Posterior vena cava (tissue), 2 donors: ENCODE measurements at regions of chr11 and their contacts with region 1.

Region 1: DNA sequence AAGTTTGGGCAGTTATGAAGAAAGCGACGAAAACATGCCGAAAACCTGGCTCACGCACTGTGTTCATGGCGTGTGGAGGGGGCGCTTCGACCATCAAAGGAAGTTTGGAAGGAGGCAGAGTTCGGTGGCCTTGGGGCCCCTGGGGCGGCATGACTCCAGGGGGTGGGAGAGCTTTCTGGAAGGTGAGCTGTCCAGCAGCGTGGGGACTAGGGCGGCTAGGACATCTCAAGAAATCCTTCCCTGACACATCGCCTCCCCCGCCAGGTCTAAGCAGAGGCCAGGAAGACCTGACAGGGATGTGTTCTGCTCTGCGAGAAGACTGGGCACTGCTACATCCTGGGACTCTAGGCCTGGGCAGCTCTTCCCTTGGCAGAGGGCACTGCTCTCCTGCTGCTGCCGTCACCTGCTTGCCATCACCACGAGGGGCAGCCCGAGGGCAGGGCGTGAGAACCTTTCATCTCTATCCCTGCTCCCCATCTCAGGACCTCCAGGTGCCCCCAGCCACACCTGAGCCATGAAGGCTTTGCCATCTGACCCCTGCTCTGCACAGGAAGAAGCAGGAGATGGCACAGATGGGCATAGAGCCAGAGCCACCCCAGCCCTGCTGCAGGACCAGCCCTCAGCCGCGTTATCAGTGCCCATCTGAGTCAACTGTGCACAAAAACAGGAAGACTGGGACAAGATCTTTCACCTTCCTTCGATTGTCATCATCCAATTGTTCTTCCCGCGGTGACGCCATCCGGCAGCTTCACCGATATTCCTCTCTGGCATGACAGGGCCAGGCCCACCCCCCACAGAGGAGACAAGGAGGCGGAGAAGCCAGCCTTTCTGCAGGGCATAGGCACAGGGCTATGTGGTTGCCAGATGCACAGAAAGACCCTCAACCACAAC is 12.7 kb downstream of the LINC01488 start:
- DNase-seq: peak; percentile 77

Region 2: GRCh38 chr11:69463181-69463994 is 30.8 kb before region 1 on chr11:
- intact Hi-C with region 1: no loop called
- DNase-seq: peak; percentile 90

Region 3: GRCh38 chr11:69479591-69480391 is 14.4 kb before region 1 on chr11:
- intact Hi-C with region 1: loop called in 1 of 2 experiments (anchors 1 kb)
- DNase-seq: peak; percentile 77

Region 4: GRCh38 chr11:69524282-69524911 is 30.2 kb after region 1 on chr11:
- intact Hi-C with region 1: loop called in 1 of 2 experiments (anchors 1 kb)
- DNase-seq: peak; percentile 49